HEK293 (cell line): ENCODE measurements at regions of chr20 and their contacts with region 1.

Region 1: DNA sequence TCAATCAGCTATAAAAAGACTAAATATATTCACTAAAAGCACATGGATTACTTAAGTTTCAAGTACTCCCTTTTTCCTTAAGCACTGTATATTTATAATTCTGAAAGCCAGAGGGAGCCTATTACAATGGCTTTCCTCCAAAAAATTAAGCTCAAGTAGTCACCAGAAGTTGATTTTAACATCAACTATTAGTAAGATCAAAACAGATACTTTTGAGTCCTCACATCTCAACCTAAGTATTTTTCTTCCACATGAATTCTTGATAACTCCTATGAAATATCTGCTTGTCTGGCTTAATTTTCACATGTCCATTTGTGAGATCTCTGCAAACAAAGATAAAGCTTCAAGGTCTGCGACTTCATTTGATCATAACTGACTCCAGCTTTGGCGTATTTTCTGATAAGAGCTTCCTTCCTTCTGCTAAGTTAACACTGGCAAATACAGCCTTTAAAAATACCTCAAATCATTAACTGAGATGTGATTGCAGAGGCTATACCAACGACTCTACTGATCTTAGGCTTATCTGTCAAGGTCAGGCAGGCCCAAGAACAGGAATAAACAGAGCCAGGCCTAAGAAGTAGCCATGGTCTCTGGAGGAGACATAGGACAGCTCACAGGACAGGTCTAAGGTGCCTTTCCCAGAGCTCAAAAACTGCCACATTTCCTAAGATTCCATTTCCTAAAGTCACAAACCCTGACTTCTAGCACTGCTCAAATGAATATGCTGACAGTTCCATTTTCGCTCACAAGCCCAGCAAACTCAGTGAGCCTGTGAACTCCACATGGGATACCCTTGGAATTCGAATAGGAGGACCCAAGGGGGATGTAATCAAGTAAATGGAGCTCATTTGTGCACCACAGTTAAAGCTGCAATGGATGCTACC is 10.0 kb downstream of the SNX5 start:
- H3K4me3 ChIP-seq: no peak overlapping the region
- H3K27ac ChIP-seq: peak overlapping the region; percentile 34
- H3K4me1 ChIP-seq: peaks cover 16% of the 10 kb centered on the region
- CTCF ChIP-seq: no peak

Region 2: GRCh38 chr20:17579369-17580039 is 379.1 kb before region 1 on chr20:
- CTCF ChIA-PET with region 1: no interaction called
- POLR2A ChIA-PET with region 1: no interaction called
- H3K4me3 ChIP-seq: no peak overlapping the region
- H3K27ac ChIP-seq: no peak overlapping the region
- H3K4me1 ChIP-seq: no peaks in the 10 kb centered on the region
- CTCF ChIP-seq: no peak

Region 3: GRCh38 chr20:17786221-17786718 is 172.3 kb before region 1 on chr20:
- CTCF ChIA-PET with region 1: no interaction called
- POLR2A ChIA-PET with region 1: no interaction called
- H3K4me3 ChIP-seq: no peak overlapping the region
- H3K27ac ChIP-seq: no peak overlapping the region
- H3K4me1 ChIP-seq: no peaks in the 10 kb centered on the region
- CTCF ChIP-seq: no peak

Region 4: GRCh38 chr20:17904027-17904426 is 54.6 kb before region 1 on chr20:
- CTCF ChIA-PET with region 1: no interaction called
- POLR2A ChIA-PET with region 1: no interaction called
- H3K4me3 ChIP-seq: no peak overlapping the region
- H3K27ac ChIP-seq: no peak overlapping the region
- H3K4me1 ChIP-seq: no peaks in the 10 kb centered on the region
- CTCF ChIP-seq: no peak

Region 5: DNA sequence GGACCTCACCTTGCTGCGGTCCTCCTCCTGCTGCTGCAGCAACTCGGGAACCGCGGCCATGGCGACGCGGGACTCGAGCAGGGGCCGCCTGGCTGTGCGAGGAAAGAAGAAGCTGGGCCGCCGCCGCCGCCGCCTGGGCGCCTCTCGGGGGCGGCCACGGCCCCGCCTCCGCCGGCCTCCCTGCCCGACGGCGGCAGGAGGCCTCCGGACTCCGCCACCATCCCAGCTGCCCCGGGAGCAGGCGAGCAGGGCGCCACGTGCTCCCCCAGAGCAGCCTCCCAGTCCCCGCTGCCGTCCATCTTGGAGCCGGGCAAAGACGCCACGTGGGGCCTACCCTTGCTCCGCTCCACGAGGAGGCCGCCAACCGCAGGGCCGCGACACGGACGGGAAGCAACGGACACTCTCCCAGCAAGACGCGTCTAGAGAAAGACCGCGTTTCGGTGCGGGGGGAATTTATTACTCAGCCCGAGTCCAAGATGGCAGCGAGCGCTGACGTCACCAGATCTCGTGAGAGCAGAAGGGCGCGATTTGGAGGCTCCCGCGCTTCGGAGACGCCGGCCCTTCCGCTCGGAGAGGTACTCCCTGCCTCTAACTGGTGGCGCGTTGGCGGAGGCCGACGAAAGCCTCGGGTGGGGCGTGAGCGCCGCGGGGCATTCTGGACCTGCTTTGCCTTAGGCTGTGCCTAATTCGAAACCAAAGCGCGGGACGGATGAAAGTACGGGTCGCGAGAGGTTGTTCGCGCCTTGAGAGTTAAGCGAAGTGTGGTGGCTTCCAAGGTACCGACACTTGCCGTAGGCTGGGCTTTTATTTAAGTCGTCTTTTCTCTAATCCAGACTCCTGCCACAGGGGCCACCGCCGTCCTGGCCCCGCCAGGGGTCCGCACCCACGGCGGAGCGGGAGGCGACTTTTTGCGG is 10.0 kb after region 1 on chr20 and contains the starts of genes MGME1 and SNX5:
- CTCF ChIA-PET with region 1: interaction called, 3 read pairs
- POLR2A ChIA-PET with region 1: interaction called, 14 read pairs
- H3K4me3 ChIP-seq: peak within 1 kb of the TSS; percentile 89
- H3K27ac ChIP-seq: peak within 1 kb of the TSS; percentile 97
- H3K4me1 ChIP-seq: peaks cover 8% of the 10 kb centered on the region; the same call in 1 of the 2 replicates
- CTCF ChIP-seq: 0 out of 2 replicates have a peak, but pooled peaks have one; percentile 33

Region 6: DNA sequence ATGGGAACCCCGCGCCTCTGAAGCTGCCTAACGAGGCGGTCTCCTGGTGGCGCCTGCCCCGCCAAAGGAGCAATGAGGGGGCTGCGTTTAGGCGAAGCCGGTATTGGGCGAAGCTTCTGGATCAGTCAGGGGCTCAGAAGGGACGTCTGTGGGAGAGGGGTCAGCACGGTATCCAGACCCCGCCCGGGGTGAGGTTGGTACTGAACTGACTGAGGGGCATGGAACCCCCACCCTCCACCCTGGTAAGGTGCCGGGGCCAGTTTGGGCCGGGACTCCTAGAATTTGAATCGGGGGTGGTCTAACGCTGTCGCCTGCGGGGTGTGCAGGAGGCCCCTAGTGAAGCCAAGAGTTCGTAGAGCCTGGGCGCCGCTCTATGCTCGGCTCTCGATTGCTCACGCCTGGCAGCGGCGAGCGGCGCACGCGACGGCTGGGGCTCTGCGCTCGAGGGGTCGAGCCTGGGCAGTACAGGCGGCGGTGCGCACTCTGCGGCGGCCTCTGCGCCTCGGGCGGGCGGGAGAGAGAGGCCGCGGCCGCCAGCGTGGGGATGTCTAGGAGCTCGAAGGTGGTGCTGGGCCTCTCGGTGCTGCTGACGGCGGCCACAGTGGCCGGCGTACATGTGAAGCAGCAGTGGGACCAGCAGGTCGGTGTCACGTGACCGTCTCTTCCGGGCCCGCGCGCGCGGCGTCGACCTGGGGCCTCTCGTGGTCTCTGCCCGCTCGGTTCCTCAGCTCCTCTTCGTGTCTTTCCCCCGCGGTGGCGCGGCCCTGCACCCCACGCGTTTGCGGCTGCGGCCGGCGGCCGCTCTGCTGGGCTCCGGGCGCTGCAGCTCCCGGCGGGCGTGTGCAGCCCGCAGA is 179.0 kb after region 1 on chr20 and contains the starts of genes KAT14 and PET117:
- CTCF ChIA-PET with region 1: no interaction called
- POLR2A ChIA-PET with region 1: no interaction called
- H3K4me3 ChIP-seq: peak within 1 kb of the TSS; percentile 86
- H3K27ac ChIP-seq: peak within 1 kb of the TSS; percentile 88
- H3K4me1 ChIP-seq: peaks cover 3% of the 10 kb centered on the region; the same call in 1 of the 2 replicates
- CTCF ChIP-seq: no peak